ENCODE measurements at regions of chr4 and their contacts with region 1.

Region 1: DNA sequence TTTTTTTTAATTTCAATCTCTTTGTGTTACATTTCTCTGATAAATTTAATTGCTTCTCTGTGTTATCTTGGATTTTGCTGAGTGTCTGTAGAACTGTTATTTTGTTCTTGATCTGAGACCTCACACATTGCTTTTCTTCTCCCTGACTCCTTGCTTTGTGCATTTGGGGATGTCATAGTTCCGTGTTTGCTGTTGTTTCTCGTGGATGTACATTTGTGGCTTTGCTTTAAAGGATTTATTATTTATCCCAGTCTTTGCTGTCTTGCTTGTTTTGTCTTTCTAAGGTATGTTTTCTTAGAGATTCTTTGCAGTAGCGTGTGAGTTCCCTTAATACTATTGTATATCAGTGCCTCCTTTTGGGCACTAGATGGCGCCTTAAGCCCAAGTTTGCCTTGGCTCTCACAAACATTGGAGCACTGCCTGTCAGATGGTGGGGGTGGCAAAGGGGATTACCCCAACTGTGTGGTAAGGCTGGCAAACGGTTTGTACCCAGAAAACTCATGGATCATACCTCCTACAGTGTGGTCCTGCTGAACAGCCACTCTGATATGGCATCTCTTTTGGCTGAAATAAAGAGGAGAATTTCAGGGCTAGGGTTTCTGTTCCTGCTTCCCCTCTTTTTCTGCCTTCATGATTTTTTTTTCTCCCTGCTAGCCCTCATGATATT is 96.4 kb downstream of the PGRMC2 start:
- DNase-seq: peak; percentile 77
- ATAC-seq: peak; percentile 98
- H3K4me3 ChIP-seq: no peak overlapping the region
- H3K27ac ChIP-seq: peak overlapping the region; percentile 9
- H3K4me1 ChIP-seq: peaks cover 5% of the 10 kb centered on the region
- H3K27me3 ChIP-seq: no peaks in the 10 kb centered on the region
- CTCF ChIP-seq: peak; percentile 92
- POLR2A ChIP-seq: no peak
- RAD21 ChIP-seq: peak; percentile 95

Region 2: DNA sequence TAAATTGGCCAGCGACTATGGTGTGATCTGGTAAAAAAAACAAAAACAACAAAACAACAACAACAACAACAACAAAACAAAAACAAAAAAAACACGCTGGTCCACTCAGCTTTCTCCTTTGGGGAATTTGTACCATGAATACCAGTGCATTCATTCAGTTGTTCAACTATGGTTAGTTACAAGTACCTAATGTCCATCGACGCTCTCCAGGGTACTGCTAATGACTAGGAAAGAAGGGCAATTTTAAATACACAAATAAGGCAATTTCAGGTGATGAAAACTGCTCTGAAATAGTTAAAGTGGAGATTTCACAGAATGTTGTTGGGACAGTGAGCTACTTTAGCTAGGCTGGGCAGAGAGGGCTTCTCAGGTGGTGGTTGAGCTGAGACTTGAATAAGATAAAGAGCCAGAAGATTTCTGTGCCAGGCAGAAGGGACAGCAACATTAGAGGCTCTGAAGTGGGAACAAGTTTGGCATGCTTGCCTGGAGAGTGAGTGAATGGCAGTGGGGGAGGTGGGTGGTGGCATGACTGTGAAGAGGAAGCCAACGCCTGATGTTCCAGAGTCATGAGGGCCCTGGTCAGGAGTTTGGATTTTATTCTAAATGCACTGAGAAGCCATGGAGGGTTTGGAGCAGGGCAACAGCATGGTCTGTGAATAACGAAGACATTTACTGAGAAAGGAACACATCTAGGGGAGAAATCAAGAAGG is 142.2 kb after region 1 on chr4:
- CTCF ChIA-PET with region 1: no interaction called
- POLR2A ChIA-PET with region 1: no interaction called
- dilution Hi-C with region 1: no loop called
- in situ Hi-C with region 1: no loop called
- intact Hi-C with region 1: no loop called
- DNase-seq: no peak
- ATAC-seq: no peak
- H3K4me3 ChIP-seq: no peak overlapping the region
- H3K27ac ChIP-seq: no peak overlapping the region
- H3K4me1 ChIP-seq: peaks cover 4% of the 10 kb centered on the region; the same call in 1 of the 2 replicates
- H3K27me3 ChIP-seq: no peaks in the 10 kb centered on the region
- CTCF ChIP-seq: no peak
- POLR2A ChIP-seq: no peak
- RAD21 ChIP-seq: no peak

Region 3: GRCh38 chr4:128354205-128354821 is 163.1 kb after region 1 on chr4:
- CTCF ChIA-PET with region 1: no interaction called
- POLR2A ChIA-PET with region 1: no interaction called
- dilution Hi-C with region 1: no loop called
- in situ Hi-C with region 1: no loop called
- intact Hi-C with region 1: loop called (anchors 2 kb)
- DNase-seq: peak; percentile 97
- ATAC-seq: peak; percentile 71
- H3K4me3 ChIP-seq: no peak overlapping the region
- H3K27ac ChIP-seq: peak overlapping the region; percentile 99
- H3K4me1 ChIP-seq: peaks cover 41% of the 10 kb centered on the region
- H3K27me3 ChIP-seq: no peaks in the 10 kb centered on the region
- CTCF ChIP-seq: no peak
- POLR2A ChIP-seq: no peak
- RAD21 ChIP-seq: no peak

Region 4: GRCh38 chr4:128477540-128477939 is 286.3 kb after region 1 on chr4:
- CTCF ChIA-PET with region 1: no interaction called
- POLR2A ChIA-PET with region 1: no interaction called
- dilution Hi-C with region 1: no loop called
- in situ Hi-C with region 1: no loop called
- intact Hi-C with region 1: no loop called
- DNase-seq: no peak
- ATAC-seq: no peak
- H3K4me3 ChIP-seq: no peak overlapping the region
- H3K27ac ChIP-seq: no peak overlapping the region
- H3K4me1 ChIP-seq: no peaks in the 10 kb centered on the region
- H3K27me3 ChIP-seq: no peaks in the 10 kb centered on the region
- CTCF ChIP-seq: no peak
- POLR2A ChIP-seq: no peak
- RAD21 ChIP-seq: no peak

Region 5: GRCh38 chr4:128553686-128554515 is 362.7 kb after region 1 on chr4:
- CTCF ChIA-PET with region 1: no interaction called
- POLR2A ChIA-PET with region 1: no interaction called
- dilution Hi-C with region 1: no loop called
- in situ Hi-C with region 1: loop called (anchors 25 kb)
- intact Hi-C with region 1: loop called (anchors 2 kb)
- DNase-seq: no peak
- ATAC-seq: no peak; the same call in 1 of the 2 replicates
- H3K4me3 ChIP-seq: peak overlapping the region; percentile 53; the same call in 1 of the 2 replicates
- H3K27ac ChIP-seq: peak overlapping the region; percentile 88; the same call in 1 of the 2 replicates
- H3K4me1 ChIP-seq: peaks cover 14% of the 10 kb centered on the region
- H3K27me3 ChIP-seq: no peaks in the 10 kb centered on the region
- CTCF ChIP-seq: no peak
- POLR2A ChIP-seq: no peak
- RAD21 ChIP-seq: no peak

Region 6: DNA sequence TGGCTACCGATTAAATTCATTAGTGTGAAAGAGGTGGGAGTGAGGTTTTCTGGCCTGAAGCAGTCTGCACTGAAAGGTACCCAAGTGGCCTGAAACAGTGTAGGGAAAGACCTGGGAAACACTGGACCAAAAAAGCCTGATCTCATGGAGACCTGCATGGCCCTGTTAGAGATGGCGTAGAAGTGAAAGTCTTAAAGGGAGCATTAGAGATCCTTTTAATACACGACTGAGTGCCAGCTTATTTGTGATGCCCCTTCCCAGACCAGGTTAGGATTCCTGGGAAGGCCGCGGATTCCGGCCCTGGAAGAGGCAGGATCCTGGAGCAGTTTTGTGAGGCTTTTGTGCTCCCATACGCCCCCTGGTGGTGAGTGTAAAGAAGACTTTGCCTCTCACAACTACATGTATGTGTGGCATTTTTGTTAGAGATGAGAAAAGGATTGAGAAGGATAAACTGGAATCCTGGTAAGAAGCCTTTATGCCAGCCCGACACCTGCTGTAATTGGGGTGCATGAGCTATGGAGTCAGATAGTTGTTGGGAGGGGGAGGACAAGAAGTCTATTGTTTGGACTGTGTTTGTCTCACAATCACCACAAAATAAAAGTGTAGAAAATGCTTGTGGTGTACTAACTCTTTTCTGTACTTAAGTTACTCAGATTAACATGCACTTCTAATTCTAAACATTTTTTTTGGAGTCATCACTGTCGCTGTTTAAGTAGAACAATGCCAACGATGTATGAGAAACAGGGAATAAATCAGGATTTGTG is 672.2 kb after region 1 on chr4:
- CTCF ChIA-PET with region 1: no interaction called
- POLR2A ChIA-PET with region 1: no interaction called
- dilution Hi-C with region 1: no loop called
- in situ Hi-C with region 1: loop called (anchors 10 kb)
- intact Hi-C with region 1: loop called (anchors 1 kb)
- DNase-seq: peak; percentile 80
- ATAC-seq: peak; percentile 65; the same call in 1 of the 2 replicates
- H3K4me3 ChIP-seq: no peak overlapping the region
- H3K27ac ChIP-seq: 0 out of 2 replicates have a peak overlapping the region, but pooled peaks have one; percentile 0
- H3K4me1 ChIP-seq: peaks cover 24% of the 10 kb centered on the region
- H3K27me3 ChIP-seq: no peaks in the 10 kb centered on the region
- CTCF ChIP-seq: peak; percentile 79
- POLR2A ChIP-seq: no peak
- RAD21 ChIP-seq: peak; percentile 78

Region 7: DNA sequence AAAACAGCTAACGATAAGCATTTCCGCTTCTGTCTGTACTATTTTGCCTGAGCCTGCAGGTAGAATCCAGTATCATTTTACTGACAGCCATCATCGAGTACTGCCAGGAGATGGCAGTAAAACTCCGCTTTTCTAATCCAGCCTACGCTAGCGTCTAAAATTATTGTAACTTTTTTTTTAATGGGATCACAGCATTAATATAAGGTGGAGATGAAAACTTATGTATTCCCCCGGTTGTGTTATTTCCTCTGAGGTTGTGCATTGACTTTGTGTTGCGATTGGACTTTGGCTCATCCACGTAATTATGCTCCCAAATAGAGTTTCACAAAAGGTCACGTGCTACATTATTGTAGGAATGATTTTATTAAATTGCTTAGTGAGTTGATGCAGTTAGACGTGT is 1152.8 kb after region 1 on chr4:
- CTCF ChIA-PET with region 1: no interaction called
- POLR2A ChIA-PET with region 1: no interaction called
- dilution Hi-C with region 1: no loop called
- in situ Hi-C with region 1: no loop called
- intact Hi-C with region 1: loop called (anchors 5 kb)
- DNase-seq: peak; percentile 27
- ATAC-seq: peak; percentile 35; the same call in 1 of the 2 replicates
- H3K4me3 ChIP-seq: no peak overlapping the region
- H3K27ac ChIP-seq: no peak overlapping the region
- H3K4me1 ChIP-seq: no peaks in the 10 kb centered on the region
- H3K27me3 ChIP-seq: no peaks in the 10 kb centered on the region; the same call in 1 of the 2 replicates
- CTCF ChIP-seq: peak; percentile 55
- POLR2A ChIP-seq: no peak
- RAD21 ChIP-seq: peak; percentile 45